ENCODE measurements at regions of chr11 and their contacts with region 1.

Region 1: DNA sequence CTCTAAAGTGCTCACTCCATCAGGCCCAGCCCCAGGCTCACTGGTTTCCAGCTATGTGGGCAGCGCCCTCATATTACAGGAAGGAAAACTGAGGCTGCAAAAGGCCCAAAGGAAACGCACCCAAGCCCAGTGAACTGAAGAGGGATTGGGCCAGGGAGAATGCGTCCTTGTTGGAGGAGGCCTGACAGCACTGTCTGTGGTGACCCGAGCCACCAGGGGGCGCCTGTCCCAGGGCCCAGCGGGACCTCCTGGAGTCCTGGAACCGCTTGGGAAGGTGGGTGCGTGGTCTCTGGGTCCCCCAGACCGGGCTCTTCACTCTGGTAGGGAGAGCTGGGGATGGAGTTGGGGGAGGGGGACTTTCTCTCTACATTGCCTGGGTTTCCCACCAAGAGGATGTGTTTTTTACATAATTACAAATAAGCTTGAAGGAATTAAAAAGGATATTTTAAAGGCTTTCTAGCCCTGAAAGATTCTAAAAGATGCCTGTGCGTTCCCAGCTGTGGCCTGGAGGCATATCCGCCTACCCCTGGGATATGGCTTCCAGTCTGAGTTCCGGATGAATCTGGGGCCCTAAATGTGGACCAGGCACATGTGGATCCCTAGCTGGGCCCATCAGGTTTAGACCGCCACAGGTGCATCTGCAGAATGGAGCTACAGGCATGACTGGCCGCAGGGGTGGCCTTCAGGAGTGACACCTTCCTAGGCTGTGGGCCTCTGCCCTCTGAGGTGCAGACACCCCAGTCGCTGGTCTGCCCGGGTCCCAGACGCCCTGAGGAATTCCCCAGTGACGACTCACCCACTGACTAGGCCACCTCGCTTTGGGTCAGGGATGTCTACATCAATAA is 4.2 kb downstream of the SPI1 start:
- DNase-seq: peak; percentile 70
- H3K4me3 ChIP-seq: no peak overlapping the region
- H3K27ac ChIP-seq: no peak overlapping the region
- H3K4me1 ChIP-seq: no peaks in the 10 kb centered on the region
- H3K27me3 ChIP-seq: no peaks in the 10 kb centered on the region
- CTCF ChIP-seq: peak; percentile 87 to 92 (median 88)
- POLR2A ChIP-seq: no peak

Region 2: DNA sequence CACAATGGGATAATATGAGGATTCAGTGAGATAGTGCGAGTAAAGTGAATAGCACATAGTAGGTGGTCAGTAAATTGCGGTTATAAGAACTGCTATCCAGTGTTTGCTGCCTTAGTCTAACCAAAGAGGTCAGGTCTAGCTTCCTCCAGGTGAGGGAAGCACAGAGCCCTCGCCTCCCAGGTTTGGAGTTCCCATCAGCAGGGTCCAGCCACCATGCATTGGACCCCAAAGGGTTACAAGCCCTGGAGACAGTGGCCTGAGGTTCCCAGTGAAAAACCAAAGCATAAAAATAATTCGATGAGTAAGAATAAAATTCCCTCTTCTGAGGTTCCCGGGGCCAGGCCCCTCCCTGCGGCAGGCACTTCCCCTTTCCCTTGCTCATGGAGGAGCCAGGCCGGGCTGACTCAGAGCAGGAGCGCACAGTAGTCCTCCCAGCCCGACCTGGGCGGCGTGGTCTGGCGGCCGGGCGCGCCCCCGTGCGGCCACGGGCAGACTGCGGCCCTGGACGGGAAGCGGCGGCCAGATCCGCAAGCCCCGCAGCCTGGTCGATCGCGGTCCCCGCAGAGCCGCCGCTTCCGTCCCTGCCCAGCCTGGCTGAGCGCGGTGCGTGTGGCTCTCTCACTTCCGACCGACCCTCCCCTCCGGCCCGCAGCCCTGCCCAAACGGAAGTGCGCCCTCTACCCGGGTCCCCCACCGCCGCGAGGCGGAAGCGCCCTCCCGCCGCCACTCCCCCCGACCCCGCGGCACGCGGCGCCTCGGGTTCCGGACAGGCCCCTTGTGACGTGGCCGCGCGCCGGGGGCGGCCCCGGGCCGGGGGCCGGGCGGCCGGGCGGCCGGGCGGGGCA is 33.9 kb after region 1 on chr11 and contains the start of gene SLC39A13:
- intact Hi-C with region 1: loop called (anchors 5 kb)
- DNase-seq: peak; percentile 92
- H3K4me3 ChIP-seq: peak within 1 kb of the TSS; percentile 58 to 68
- H3K27ac ChIP-seq: peak within 1 kb of the TSS; percentile 90 to 94
- H3K4me1 ChIP-seq: peaks cover 8% of the 10 kb centered on the region
- H3K27me3 ChIP-seq: no peaks in the 10 kb centered on the region
- CTCF ChIP-seq: peak; percentile 74 to 97 (median 88)
- POLR2A ChIP-seq: peak; percentile 82
- total RNA-seq, gene SLC39A13: 53.1 to 93.7 TPM

Region 3: DNA sequence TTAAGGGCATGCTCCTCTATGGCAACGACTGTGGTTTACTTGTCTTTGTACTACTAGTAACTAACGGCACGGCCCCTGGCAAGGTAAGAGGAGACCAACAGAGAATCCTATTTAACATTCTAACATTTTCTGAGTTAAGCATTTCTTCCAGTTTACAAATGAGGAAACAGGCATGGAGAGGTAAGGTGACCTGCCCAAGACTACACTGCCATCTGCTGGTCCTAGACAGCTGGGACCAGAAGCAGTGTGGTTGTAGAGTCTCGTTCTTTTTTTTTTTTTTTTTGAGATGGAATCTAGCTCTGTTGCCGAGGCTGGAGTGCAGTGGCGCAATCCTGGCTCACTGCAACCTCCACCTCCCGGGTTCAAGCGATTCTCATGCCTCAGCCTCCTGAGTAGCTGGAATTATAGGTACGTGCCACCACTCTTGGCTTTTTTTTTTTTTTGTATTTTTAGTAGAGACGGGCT is 80.1 kb after region 1 on chr11:
- intact Hi-C with region 1: loop called (anchors 5 kb)
- DNase-seq: peak; percentile 63
- H3K4me3 ChIP-seq: no peak overlapping the region
- H3K27ac ChIP-seq: no peak overlapping the region
- H3K4me1 ChIP-seq: no peaks in the 10 kb centered on the region
- H3K27me3 ChIP-seq: no peaks in the 10 kb centered on the region
- CTCF ChIP-seq: peak; percentile 40 to 70 (median 54)
- POLR2A ChIP-seq: no peak

Region 4: GRCh38 chr11:47858169-47858543 is 484.1 kb after region 1 on chr11:
- intact Hi-C with region 1: loop called (anchors 10 kb)
- DNase-seq: no peak
- H3K4me3 ChIP-seq: no peak overlapping the region
- H3K27ac ChIP-seq: no peak overlapping the region
- H3K4me1 ChIP-seq: no peaks in the 10 kb centered on the region
- H3K27me3 ChIP-seq: no peaks in the 10 kb centered on the region
- CTCF ChIP-seq: no peak
- POLR2A ChIP-seq: no peak

Measured in prostate gland (tissue), 2 donors.